Activated CD4-positive, alpha-beta memory T cell treated with anti-CD3 and anti-CD28 coated beads for 36 hours (primary cell): ENCODE measurements at regions of chr4 and their contacts with region 1.

Region 1: GRCh38 chr4:145709843-145710242 is 29.9 kb downstream of the C4orf51 start:
- DNase-seq: peak; percentile 30
- H3K4me3 Mint-ChIP-seq: no peak overlapping the region
- H3K27ac Mint-ChIP-seq: no peak overlapping the region
- H3K4me1 Mint-ChIP-seq: peaks cover 14% of the 10 kb centered on the region
- H3K27me3 Mint-ChIP-seq: peaks cover 5% of the 10 kb centered on the region

Region 2: GRCh38 chr4:145719752-145720624 is 10.1 kb after region 1 on chr4:
- CTCF ChIA-PET with region 1: no interaction called
- POLR2A ChIA-PET with region 1: interaction called, 3 read pairs
- intact Hi-C with region 1: loop called (anchors 1 kb)
- DNase-seq: peak; percentile 76
- H3K4me3 Mint-ChIP-seq: no peak overlapping the region
- H3K27ac Mint-ChIP-seq: peak overlapping the region; percentile 76
- H3K4me1 Mint-ChIP-seq: peaks cover 21% of the 10 kb centered on the region
- H3K27me3 Mint-ChIP-seq: peaks cover 15% of the 10 kb centered on the region